GM13977 (cell line): ENCODE measurements at regions of chr9 and their contacts with region 1.

Region 1: DNA sequence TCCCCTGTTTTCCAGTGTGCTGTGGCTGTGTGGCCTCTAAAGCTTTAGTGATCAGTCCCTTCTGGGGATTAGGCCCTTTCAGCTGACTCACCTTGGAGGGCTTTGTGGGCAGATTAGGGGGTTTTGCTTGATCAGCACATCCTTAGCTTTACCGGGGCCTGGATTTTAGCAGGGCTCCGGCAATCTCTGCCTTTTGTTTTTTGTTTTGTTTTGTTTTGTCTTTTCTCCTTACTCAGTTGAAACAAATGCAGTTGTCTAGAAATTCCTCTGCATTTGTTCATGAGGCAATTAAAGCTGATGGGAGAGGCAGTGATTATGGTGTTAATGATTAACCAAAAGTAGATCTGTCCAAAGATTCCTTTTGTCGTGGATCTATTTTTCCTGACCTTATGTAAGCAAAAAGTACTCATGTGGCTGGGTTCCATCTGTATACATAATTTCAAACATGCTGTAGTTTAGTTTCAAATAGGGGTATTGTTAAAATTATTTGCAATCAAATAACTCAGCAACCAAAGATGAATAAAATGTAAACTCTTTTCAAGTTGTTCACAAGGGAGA is 5.2 kb upstream of the TDRD7 start:
- DNase-seq: no peak
- CTCF ChIP-seq: no peak

Region 2: DNA sequence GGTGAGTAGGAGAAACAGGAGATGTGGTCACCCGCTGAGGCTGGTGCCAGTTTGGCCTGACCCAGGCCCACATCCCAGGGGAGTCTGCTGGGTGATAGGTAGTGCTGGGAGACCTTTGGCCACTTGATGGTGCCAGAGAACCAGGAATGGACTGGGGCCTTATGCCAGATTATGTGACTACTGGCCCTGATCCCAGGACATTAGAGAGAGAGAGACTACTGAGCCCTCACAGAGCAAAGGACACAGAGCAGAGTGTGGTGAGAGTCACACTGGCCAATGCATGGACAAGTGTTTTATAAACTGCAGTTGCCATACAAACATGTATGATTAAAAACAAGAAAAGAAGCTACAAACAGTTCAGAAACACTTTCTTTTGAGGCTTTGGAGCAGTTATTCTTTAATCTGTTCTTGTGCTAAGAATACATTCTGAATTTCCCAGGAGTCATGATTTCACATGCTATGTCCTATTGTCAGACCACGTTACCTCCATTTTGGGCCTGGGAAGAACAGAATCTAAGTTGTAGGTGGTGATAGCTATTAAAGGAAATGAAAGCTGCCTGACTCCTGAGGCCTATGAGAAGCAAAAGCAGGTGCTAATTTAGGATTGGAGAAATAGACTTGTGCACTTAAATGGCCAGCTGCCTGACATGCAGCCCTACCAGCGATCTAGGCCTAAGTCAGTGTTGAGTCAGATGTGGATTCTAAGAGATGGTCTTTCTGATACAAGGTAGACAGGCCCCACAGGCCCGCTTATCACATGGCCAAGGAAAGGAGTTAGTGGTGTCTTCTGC is 62.2 kb after region 1 on chr9:
- in situ Hi-C with region 1: no loop called
- DNase-seq: peak; percentile 64
- CTCF ChIP-seq: peak; percentile 91

Region 3: DNA sequence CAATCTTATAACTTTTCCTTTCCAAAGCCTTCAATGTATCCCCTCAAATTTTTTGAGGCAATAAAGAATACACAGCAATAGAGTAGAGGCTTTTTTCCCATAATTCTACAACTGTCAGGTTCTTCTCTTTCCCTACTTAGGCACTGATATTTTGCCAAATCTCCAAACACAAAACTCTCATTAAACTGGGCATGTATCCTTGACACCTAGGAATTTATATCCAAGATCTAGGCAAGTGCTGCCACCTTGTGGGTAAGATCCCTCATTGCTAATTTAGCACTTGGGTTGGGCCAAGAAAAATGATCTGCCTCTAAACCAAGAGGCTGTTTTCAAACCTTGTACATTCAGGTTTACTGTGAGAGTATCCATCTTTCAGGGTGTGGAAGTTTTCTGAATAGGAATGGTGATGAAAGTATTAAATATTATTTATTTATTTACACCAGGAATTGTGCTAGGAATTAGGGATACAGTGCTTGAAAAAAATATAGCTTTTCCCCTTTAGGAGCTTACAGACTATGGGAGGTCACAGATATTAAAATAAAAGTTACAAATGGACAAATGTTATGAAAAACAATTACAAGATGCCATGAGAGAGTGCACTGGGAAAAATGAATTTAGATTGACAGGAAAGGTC is 208.9 kb after region 1 on chr9:
- in situ Hi-C with region 1: loop called (anchors 10 kb)
- DNase-seq: peak; percentile 61
- CTCF ChIP-seq: peak; percentile 74